Common myeloid progenitor, CD34-positive (primary cell): ENCODE measurements at regions of chr19 and their contacts with region 1.

Region 1: GRCh38 chr19:42268704-42269477 is at the start of gene CIC:
- DNase-seq: peak; percentile 100
- H3K4me3 ChIP-seq: peak within 1 kb of the TSS; percentile 74 to 93 (median 81)
- H3K27ac ChIP-seq: peak within 1 kb of the TSS; percentile 99
- H3K4me1 ChIP-seq: peaks cover 7 to 37% (median 33%) of the 10 kb centered on the region in 4 experiments
- H3K27me3 ChIP-seq: no peaks in the 10 kb centered on the region

Region 2: GRCh38 chr19:42176990-42177685 is 91.8 kb before region 1 on chr19:
- CTCF ChIA-PET with region 1: no interaction called
- POLR2A ChIA-PET with region 1: no interaction called
- DNase-seq: peak; percentile 83 to 91 (median 85)
- H3K4me3 ChIP-seq: peak overlapping the region in 3 of 7 experiments; percentile 28 to 72 (median 65)
- H3K27ac ChIP-seq: no peak overlapping the region
- H3K4me1 ChIP-seq: peaks cover 0 to 19% (median 15%) of the 10 kb centered on the region in 4 experiments
- H3K27me3 ChIP-seq: peaks cover 6 to 69% (median 29%) of the 10 kb centered on the region in 5 experiments

Region 3: DNA sequence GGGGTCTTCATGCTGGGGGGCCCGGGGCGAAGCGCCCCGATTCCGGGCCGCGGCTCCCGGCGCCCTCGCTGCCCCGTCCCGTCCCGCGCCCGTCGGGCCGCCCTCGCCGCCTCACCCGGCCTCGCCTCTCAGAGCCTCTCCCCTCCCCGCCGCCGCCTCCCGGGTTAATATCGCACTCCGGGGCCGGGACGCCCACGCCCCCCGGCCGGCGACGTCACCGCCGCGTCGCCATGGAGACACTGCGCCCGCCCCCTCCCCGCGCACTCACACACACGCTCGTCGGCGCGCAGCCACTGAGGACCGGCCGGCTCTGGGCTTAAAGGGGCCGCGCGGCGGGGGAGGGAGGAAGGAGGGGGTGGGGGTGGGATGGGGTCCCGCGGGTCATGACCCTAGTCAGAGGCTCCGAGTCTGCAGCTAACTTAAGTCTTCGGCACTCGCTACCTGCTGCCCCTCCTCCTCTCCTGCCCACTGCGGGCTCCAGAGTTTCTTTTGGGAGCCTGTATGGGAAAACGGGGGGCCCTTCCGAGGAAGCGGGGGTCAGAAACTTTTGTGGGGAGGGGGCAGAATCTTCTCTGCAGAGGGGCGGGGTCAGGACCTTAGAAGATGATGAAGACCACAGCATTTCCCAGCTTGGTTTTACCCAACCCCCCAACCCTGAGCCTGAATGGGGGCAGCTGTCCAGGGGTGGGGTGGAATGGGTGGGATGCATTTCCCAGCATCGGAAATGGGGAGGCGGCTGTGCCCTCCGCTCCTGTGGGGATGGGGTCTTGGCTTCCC is 13.7 kb before region 1 on chr19 and contains the start of gene ERF:
- CTCF ChIA-PET with region 1: interaction called, 3 read pairs
- POLR2A ChIA-PET with region 1: interaction called, 12 read pairs
- DNase-seq: peak; percentile 89 to 95 (median 94)
- H3K4me3 ChIP-seq: peak within 1 kb of the TSS; percentile 84 to 96 (median 89)
- H3K27ac ChIP-seq: peak within 1 kb of the TSS; percentile 74 to 89
- H3K4me1 ChIP-seq: peaks cover 0 to 44% (median 40%) of the 10 kb centered on the region in 4 experiments
- H3K27me3 ChIP-seq: no peaks in the 10 kb centered on the region

Region 4: DNA sequence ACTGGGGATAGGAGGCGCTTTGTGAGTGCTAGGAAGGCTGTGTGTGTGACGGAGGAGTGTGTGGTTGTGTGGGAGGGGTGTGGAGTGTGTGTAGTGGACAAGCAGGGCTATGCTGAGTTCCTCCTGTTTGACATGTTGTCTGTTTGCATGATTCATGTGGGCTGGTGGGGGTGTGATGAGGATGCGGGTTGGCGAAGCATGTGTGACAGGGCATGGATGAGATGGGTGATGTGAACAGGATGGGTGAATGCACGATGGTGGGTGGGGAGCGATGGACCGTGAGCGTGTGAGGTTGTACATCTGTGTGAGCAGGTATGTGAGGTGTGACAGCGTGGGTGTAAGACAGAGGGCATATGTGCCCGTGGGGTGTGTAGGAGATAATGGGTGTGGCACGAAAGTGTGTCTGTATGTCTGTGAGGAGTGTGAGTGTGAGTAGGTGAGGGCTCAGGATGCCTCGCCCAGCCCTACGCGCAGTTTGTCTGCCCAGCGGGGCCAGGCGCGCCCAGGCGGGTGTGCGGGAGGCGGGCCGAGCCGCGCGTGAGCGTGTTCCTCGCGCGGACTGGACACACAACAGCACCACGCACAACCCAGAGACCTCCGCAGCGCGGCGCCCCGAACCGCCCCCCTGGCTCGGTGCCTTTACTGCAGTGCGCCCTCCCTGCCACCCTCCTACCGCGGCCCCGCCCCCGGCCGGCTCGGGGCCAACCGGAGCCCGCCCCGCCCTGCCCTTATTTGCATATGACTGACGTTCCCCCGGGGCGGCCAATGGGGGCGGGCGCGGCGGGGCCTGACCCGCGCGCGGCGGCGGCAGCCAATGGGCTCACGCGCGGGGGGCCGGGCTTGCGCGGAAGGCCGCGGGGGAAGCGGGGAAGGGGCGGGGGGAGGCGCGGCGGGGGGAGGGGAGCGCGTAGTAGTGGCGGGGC is 14.5 kb after region 1 on chr19:
- CTCF ChIA-PET with region 1: interaction called, 21 read pairs
- POLR2A ChIA-PET with region 1: interaction called, 8 read pairs
- DNase-seq: peak; percentile 93 to 97 (median 96)
- H3K4me3 ChIP-seq: peak overlapping the region in 6 of 7 experiments; percentile 2 to 91 (median 64)
- H3K27ac ChIP-seq: peak overlapping the region; percentile 4 to 73
- H3K4me1 ChIP-seq: peaks cover 9 to 73% (median 63%) of the 10 kb centered on the region in 4 experiments
- H3K27me3 ChIP-seq: no peaks in the 10 kb centered on the region